PC-9 (cell line): ENCODE measurements at regions of chr2 and their contacts with region 1.

Region 1: GRCh38 chr2:119702918-119703401 is 24.0 kb downstream of the TMEM177 start:
- DNase-seq: peak; percentile 56 to 80
- H3K4me3 ChIP-seq: no peak overlapping the region
- H3K27ac ChIP-seq: no peak overlapping the region
- H3K4me1 ChIP-seq: no peaks in the 10 kb centered on the region
- H3K27me3 ChIP-seq: no peaks in the 10 kb centered on the region
- CTCF ChIP-seq: peak; percentile 100

Region 2: GRCh38 chr2:119721462-119721861 is 18.5 kb after region 1 on chr2:
- CTCF ChIA-PET with region 1: interaction called, 12 read pairs
- POLR2A ChIA-PET with region 1: no interaction called
- intact Hi-C with region 1: no loop called
- DNase-seq: peak in 1 of 2 experiments; percentile 16
- H3K4me3 ChIP-seq: no peak overlapping the region
- H3K27ac ChIP-seq: no peak overlapping the region
- H3K4me1 ChIP-seq: peaks cover 4% of the 10 kb centered on the region; the same call in 1 of the 2 replicates
- H3K27me3 ChIP-seq: peaks cover 2% of the 10 kb centered on the region; the same call in 1 of the 2 replicates
- CTCF ChIP-seq: no peak

Region 3: GRCh38 chr2:119753041-119753929 is 50.3 kb after region 1 on chr2:
- CTCF ChIA-PET with region 1: no interaction called
- POLR2A ChIA-PET with region 1: no interaction called
- intact Hi-C with region 1: no loop called
- DNase-seq: no peak
- H3K4me3 ChIP-seq: no peak overlapping the region
- H3K27ac ChIP-seq: no peak overlapping the region
- H3K4me1 ChIP-seq: peaks cover 16% of the 10 kb centered on the region
- H3K27me3 ChIP-seq: no peaks in the 10 kb centered on the region
- CTCF ChIP-seq: peak; percentile 73

Region 4: GRCh38 chr2:119826370-119826961 is 123.5 kb after region 1 on chr2:
- CTCF ChIA-PET with region 1: no interaction called
- POLR2A ChIA-PET with region 1: no interaction called
- intact Hi-C with region 1: loop called (anchors 2 kb)
- DNase-seq: no peak
- H3K4me3 ChIP-seq: no peak overlapping the region
- H3K27ac ChIP-seq: no peak overlapping the region
- H3K4me1 ChIP-seq: no peaks in the 10 kb centered on the region
- H3K27me3 ChIP-seq: no peaks in the 10 kb centered on the region
- CTCF ChIP-seq: peak; percentile 65

Region 5: GRCh38 chr2:120012771-120013596 is 310.0 kb after region 1 on chr2 and contains the start of gene EPB41L5:
- CTCF ChIA-PET with region 1: no interaction called
- POLR2A ChIA-PET with region 1: no interaction called
- intact Hi-C with region 1: loop called (anchors 5 kb)
- DNase-seq: peak; percentile 88 to 95
- H3K4me3 ChIP-seq: peak within 1 kb of the TSS; percentile 82
- H3K27ac ChIP-seq: peak within 1 kb of the TSS; percentile 88
- H3K4me1 ChIP-seq: peaks cover 24% of the 10 kb centered on the region
- H3K27me3 ChIP-seq: no peaks in the 10 kb centered on the region
- CTCF ChIP-seq: no peak
- total RNA-seq, gene EPB41L5: 18.4 and 21.6 TPM in 2 replicates

Region 6: GRCh38 chr2:120312861-120313694 is 610.1 kb after region 1 on chr2:
- CTCF ChIA-PET with region 1: no interaction called
- POLR2A ChIA-PET with region 1: no interaction called
- intact Hi-C with region 1: loop called (anchors 2 kb)
- DNase-seq: peak; percentile 77 to 90
- H3K4me3 ChIP-seq: no peak overlapping the region
- H3K27ac ChIP-seq: no peak overlapping the region
- H3K4me1 ChIP-seq: no peaks in the 10 kb centered on the region
- H3K27me3 ChIP-seq: no peaks in the 10 kb centered on the region
- CTCF ChIP-seq: peak; percentile 98